Activated CD4-positive, alpha-beta T cell treated with anti-CD3 and anti-CD28 coated beads for 36 hours (primary cell): ENCODE measurements at regions of chr6 and their contacts with region 1.

Region 1: GRCh38 chr6:108260809-108261569 is at the start of gene SNX3:
- DNase-seq: peak; percentile 94
- ATAC-seq: peak; percentile 93
- H3K4me3 Mint-ChIP-seq: peak within 1 kb of the TSS; percentile 80
- H3K27ac Mint-ChIP-seq: peak within 1 kb of the TSS; percentile 89
- H3K4me1 Mint-ChIP-seq: peaks cover 23% of the 10 kb centered on the region
- H3K27me3 Mint-ChIP-seq: no peaks in the 10 kb centered on the region
- total RNA-seq, gene SNX3: 77.1 to 112 TPM

Region 2: GRCh38 chr6:107033126-107033525 is 1227.9 kb before region 1 on chr6:
- CTCF ChIA-PET with region 1: no interaction called
- POLR2A ChIA-PET with region 1: no interaction called
- intact Hi-C with region 1: loop called in 1 of 2 experiments (anchors 2 kb)
- DNase-seq: no peak
- ATAC-seq: peak; percentile 7
- H3K4me3 Mint-ChIP-seq: no peak overlapping the region
- H3K27ac Mint-ChIP-seq: peak overlapping the region; percentile 28
- H3K4me1 Mint-ChIP-seq: peaks cover 39% of the 10 kb centered on the region
- H3K27me3 Mint-ChIP-seq: no peaks in the 10 kb centered on the region

Region 3: GRCh38 chr6:107731422-107732319 is 529.3 kb before region 1 on chr6:
- CTCF ChIA-PET with region 1: no interaction called
- POLR2A ChIA-PET with region 1: interaction called, 3 read pairs
- intact Hi-C with region 1: loop called in 1 of 2 experiments (anchors 10 kb)
- DNase-seq: peak; percentile 46
- ATAC-seq: peak; percentile 20
- H3K4me3 Mint-ChIP-seq: peak overlapping the region; percentile 79
- H3K27ac Mint-ChIP-seq: peak overlapping the region; percentile 91
- H3K4me1 Mint-ChIP-seq: peaks cover 82% of the 10 kb centered on the region
- H3K27me3 Mint-ChIP-seq: no peaks in the 10 kb centered on the region

Region 4: DNA sequence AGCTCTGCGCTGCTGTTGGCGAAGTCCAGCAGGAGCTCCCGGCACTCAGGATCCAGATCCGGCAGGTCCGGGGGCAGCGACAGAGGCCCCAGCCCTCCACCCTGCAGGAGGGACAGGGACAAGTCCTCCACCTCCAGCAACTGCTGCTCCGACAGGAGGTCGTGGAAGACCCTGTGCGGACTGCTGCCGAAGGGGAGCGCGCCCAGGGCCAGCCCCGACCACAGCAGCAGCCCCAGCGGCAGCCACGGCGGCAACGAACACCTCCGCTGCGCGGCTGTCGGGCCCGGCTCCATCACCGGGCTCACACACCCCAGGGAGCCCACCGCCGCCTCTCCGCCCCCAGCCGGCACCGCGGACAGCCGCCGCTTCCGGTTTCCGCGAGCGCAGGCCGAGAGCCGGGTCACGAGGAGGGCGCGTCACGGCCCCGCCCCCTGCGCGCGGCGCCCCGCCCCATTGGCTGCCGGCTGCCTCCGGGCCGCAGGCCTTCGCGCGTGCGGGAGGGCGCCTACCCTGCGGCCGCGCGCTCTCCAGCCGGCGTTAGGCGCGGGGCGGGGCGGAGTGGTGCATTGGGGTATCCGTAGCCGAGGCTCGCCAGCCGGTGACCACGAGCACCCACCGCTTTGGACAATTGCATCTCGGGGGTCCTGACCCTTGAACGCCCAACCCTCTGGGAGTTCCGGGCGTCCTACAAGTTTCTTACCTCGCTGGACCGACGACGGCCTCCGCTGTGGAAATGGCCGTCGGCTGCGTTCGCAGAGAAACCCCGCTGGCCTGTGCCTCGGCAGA is 186.4 kb before region 1 on chr6 and contains the start of gene OSTM1:
- CTCF ChIA-PET with region 1: no interaction called
- POLR2A ChIA-PET with region 1: no interaction called
- intact Hi-C with region 1: loop called in 1 of 2 experiments (anchors 1 kb)
- DNase-seq: peak; percentile 96
- ATAC-seq: peak; percentile 98
- H3K4me3 Mint-ChIP-seq: peak within 1 kb of the TSS; percentile 76
- H3K27ac Mint-ChIP-seq: peak within 1 kb of the TSS; percentile 80
- H3K4me1 Mint-ChIP-seq: peaks cover 19% of the 10 kb centered on the region
- H3K27me3 Mint-ChIP-seq: peaks cover 3% of the 10 kb centered on the region
- total RNA-seq, gene OSTM1: 5.5 to 7.3 TPM

Region 5: DNA sequence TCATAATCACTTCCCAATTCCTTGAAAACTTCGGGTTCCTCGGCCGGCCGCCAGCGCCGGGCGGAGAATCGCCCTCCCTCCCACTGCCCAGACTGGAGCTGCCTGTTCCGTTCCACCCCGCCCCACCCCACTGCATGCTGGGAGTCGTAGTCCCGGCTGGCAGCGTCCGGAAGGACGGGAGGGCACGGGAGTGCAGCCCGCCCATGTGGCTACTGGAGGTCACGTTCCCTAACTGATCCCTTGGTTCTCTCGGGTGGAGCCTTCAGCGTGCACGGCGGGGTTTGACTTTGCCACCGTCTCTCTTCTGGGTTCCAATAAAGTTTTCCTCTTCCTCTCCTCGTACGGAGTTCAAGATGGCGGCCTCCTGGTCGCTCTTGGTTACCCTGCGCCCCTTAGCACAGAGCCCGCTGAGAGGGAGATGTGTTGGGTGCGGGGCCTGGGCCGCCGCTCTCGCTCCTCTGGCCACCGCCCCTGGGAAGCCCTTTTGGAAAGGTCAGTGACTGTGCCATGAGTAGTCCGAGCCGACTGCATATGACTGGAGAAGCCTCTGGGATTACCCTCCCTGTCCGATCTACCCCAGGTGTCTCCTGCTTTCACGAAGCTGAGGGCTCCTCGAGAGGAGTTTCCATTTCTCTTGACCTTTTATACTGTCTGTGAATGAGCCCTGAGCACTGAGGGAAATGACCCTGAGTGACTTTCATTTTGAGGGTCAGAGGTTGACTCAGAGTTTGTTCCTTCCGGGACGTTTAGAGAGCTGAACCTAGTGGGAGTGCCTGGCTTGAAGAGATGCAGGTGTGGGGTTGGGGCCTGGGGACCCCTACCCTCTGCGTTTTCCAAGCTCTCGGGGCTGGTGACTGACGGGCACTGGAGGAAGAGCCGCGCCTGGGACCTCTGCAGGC is 34.0 kb after region 1 on chr6 and contains the start of gene AFG1L:
- CTCF ChIA-PET with region 1: interaction called, 10 read pairs
- POLR2A ChIA-PET with region 1: interaction called, 17 read pairs
- intact Hi-C with region 1: loop called (anchors 1 kb)
- DNase-seq: peak; percentile 93
- ATAC-seq: peak; percentile 92
- H3K4me3 Mint-ChIP-seq: peak within 1 kb of the TSS; percentile 99
- H3K27ac Mint-ChIP-seq: peak within 1 kb of the TSS; percentile 100
- H3K4me1 Mint-ChIP-seq: peaks cover 13% of the 10 kb centered on the region
- H3K27me3 Mint-ChIP-seq: no peaks in the 10 kb centered on the region
- total RNA-seq, gene AFG1L: 6.6 TPM

Region 6: DNA sequence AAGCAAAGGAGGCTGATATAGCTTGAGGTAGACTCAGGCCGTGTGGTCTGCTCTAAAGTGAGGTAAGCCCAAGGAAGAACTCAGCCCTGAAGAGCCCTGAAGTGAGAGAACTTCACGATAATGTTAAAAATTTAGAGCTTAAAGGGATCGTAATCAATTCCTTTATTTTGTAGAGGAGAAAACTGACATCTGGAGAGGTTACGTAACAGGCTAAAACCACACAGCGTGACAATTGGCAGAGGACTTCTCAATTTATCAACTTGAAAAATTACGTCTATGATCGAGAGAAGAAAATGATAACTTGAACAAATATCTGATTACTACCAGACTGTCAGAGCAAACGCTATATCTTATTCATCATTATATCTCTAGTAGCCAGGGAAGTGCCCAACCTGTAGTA is 177.9 kb after region 1 on chr6:
- CTCF ChIA-PET with region 1: no interaction called
- POLR2A ChIA-PET with region 1: no interaction called
- intact Hi-C with region 1: loop called in 1 of 2 experiments (anchors 2 kb)
- DNase-seq: no peak
- ATAC-seq: no peak
- H3K4me3 Mint-ChIP-seq: no peak overlapping the region
- H3K27ac Mint-ChIP-seq: no peak overlapping the region
- H3K4me1 Mint-ChIP-seq: peaks cover 3% of the 10 kb centered on the region
- H3K27me3 Mint-ChIP-seq: peaks cover 38% of the 10 kb centered on the region

Region 7: DNA sequence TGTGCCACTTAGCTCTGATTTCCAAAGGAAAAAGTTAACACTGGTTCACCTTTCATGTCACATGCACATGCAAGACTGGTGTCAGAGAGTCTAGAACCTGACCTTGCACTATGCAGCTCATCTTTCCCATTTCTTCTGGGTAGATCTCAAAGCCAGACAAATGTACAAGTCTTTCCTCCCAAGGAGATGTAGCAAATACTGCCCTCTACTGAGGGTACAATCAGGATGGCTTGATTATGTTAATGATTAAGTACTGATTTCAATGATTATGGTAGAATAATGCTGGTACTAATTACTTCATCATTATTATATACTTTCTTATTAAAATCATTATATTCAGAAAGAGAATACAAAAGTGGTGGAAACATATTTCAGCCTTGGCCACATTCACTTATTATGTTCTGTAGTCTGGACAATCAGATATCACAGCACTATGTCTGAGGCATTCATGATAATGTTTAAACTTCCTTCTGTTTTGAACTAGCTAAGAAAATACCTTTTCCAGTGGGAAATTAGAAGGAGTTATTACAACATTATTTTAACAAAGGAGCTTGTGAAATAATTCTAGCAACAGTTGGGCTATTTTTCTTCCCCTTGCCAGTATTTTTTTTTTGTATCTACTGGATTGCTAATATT is 231.3 kb after region 1 on chr6:
- CTCF ChIA-PET with region 1: interaction called, 10 read pairs
- POLR2A ChIA-PET with region 1: no interaction called
- intact Hi-C with region 1: loop called in 1 of 2 experiments (anchors 1 kb)
- DNase-seq: no peak
- ATAC-seq: peak; percentile 44
- H3K4me3 Mint-ChIP-seq: no peak overlapping the region
- H3K27ac Mint-ChIP-seq: no peak overlapping the region
- H3K4me1 Mint-ChIP-seq: no peaks in the 10 kb centered on the region
- H3K27me3 Mint-ChIP-seq: no peaks in the 10 kb centered on the region